Activated CD4-positive, alpha-beta T cell treated with anti-CD3 and anti-CD28 coated beads, Interleukin-2, amount 10 ng/mL, durations not matched to agents 7 days and 5 days (primary cell): ENCODE measurements at regions of chr1 and their contacts with region 1.

Region 1: GRCh38 chr1:26874896-26875295 is 11.9 kb downstream of the SFN start:
- DNase-seq: no peak
- H3K4me3 Mint-ChIP-seq: no peak overlapping the region
- H3K27ac Mint-ChIP-seq: no peak overlapping the region
- H3K4me1 Mint-ChIP-seq: no peaks in the 10 kb centered on the region
- H3K27me3 Mint-ChIP-seq: no peaks in the 10 kb centered on the region

Region 2: GRCh38 chr1:26858160-26858559 is 16.7 kb before region 1 on chr1:
- CTCF ChIA-PET with region 1: interaction called, 10 read pairs
- POLR2A ChIA-PET with region 1: no interaction called
- DNase-seq: no peak
- H3K4me3 Mint-ChIP-seq: no peak overlapping the region
- H3K27ac Mint-ChIP-seq: no peak overlapping the region
- H3K4me1 Mint-ChIP-seq: peaks cover 16% of the 10 kb centered on the region
- H3K27me3 Mint-ChIP-seq: no peaks in the 10 kb centered on the region

Region 3: GRCh38 chr1:26864610-26865527 is 10.0 kb before region 1 on chr1:
- CTCF ChIA-PET with region 1: interaction called, 10 read pairs
- POLR2A ChIA-PET with region 1: no interaction called
- DNase-seq: peak; percentile 96
- H3K4me3 Mint-ChIP-seq: peak overlapping the region; percentile 82
- H3K27ac Mint-ChIP-seq: peak overlapping the region; percentile 93
- H3K4me1 Mint-ChIP-seq: peaks cover 34% of the 10 kb centered on the region
- H3K27me3 Mint-ChIP-seq: no peaks in the 10 kb centered on the region

Region 4: GRCh38 chr1:26889551-26890466 is 14.9 kb after region 1 on chr1 and contains the start of gene GPN2:
- CTCF ChIA-PET with region 1: interaction called, 10 read pairs
- POLR2A ChIA-PET with region 1: interaction called, 5 read pairs
- DNase-seq: peak; percentile 85
- H3K4me3 Mint-ChIP-seq: peak within 1 kb of the TSS; percentile 94
- H3K27ac Mint-ChIP-seq: peak within 1 kb of the TSS; percentile 95
- H3K4me1 Mint-ChIP-seq: peaks cover 34% of the 10 kb centered on the region
- H3K27me3 Mint-ChIP-seq: no peaks in the 10 kb centered on the region
- total RNA-seq, gene GPN2: 25.9 to 26.9 TPM